WTC11 (cell line): ENCODE measurements at regions of chr16 and their contacts with region 1.

Region 1: GRCh38 chr16:64051824-64052223 is 1070.0 kb downstream of the CDH11 start:
- DNase-seq: no peak
- ATAC-seq: peak; percentile 75
- H3K4me3 Mint-ChIP-seq: no peak overlapping the region
- H3K27ac Mint-ChIP-seq: no peak overlapping the region
- H3K4me1 Mint-ChIP-seq: peaks cover 7% of the 10 kb centered on the region
- H3K27me3 Mint-ChIP-seq: no peaks in the 10 kb centered on the region
- CTCF ChIP-seq: peak; percentile 29; the same call in 1 of the 2 replicates

Region 2: DNA sequence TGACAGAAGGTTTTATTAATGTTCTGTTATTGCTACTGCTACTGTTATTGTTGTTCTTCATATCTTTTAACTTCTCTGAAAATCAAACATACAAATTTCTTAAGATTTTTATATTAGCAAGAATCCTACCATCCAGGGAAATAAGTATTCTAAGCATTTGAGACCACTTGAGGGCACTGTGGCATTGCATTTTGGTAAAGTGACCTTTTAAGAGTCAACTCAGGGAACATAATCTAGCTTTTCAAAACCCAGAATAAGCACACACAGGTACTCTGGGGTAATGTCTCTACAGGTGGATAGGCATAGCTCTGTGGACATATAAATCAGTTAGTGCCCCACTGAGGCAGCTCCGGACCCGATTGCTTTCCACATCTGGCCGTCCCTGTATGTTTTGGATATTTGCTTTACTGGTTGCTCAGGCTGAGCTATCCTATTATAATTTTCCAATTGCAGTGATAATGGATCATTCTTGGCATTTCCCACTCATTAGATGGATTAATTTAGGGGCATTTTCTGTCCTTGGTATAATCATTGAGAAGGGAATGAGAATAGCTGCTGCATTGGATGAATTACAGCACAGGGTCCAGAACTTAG is 590.5 kb before region 1 on chr16:
- CTCF ChIA-PET with region 1: interaction called, 33 read pairs
- POLR2A ChIA-PET with region 1: no interaction called
- DNase-seq: peak; percentile 28
- ATAC-seq: peak; percentile 77
- H3K4me3 Mint-ChIP-seq: no peak overlapping the region
- H3K27ac Mint-ChIP-seq: no peak overlapping the region
- H3K4me1 Mint-ChIP-seq: peaks cover 9% of the 10 kb centered on the region
- H3K27me3 Mint-ChIP-seq: no peaks in the 10 kb centered on the region
- CTCF ChIP-seq: 0 out of 2 replicates have a peak, but pooled peaks have one; percentile 19

Region 3: GRCh38 chr16:64391063-64391600 is 339.3 kb after region 1 on chr16:
- CTCF ChIA-PET with region 1: no interaction called
- POLR2A ChIA-PET with region 1: no interaction called
- DNase-seq: no peak
- ATAC-seq: no peak
- H3K4me3 Mint-ChIP-seq: no peak overlapping the region
- H3K27ac Mint-ChIP-seq: no peak overlapping the region
- H3K4me1 Mint-ChIP-seq: peaks cover 5% of the 10 kb centered on the region; the same call in 1 of the 2 replicates
- H3K27me3 Mint-ChIP-seq: no peaks in the 10 kb centered on the region
- CTCF ChIP-seq: no peak